ENCODE measurements at regions of chr1 and their contacts with region 1.

Region 1: DNA sequence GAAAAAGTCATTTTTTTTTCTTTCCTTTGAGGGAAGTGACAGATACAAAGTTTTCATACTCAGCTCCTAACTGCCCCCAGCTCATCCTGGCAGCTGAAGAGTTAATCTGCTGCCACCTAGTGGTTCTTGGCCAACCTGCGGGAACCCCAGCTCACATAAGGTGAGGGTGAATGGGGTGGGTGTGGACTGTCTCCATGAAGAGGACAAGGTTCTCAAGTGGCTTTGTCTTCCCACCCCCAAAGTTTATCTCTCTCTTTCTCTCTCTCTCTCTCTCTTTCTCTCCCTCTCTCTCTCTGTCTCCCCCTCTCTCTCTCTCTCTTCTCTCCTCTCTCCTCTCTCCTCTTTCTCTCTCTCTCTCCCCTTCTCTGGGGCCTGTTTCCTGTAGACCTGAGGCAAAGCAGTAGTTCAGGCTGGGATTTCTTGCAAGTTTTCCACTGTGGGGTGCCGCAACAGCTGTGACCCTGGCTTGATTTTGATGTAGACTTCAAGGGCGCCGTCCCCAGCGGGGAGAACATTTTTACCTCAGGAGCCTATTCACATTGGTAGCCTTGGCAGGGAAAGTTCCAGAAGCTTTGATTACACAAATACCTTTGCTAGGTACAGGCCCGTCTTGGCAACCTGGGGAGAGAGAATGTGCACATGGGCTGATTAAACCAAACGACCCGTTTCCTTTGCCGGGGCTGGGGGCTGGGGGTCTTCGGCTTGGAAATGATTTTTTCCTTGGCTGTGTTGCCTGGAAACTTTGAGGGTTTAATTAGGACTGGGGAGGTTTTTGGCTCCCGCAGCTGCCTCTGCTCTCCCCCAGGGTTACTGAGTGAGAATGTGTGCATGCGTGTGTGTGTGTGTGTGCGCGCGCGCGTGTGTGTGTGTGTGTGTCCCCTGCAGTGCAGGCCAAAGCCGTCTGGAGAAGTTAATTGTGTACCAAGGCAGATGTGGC is 135.9 kb downstream of the TM2D1 start:
- DNase-seq: peak; percentile 79
- H3K4me3 Mint-ChIP-seq: no peak overlapping the region
- H3K27ac Mint-ChIP-seq: no peak overlapping the region
- H3K4me1 Mint-ChIP-seq: peaks cover 9% of the 10 kb centered on the region
- H3K27me3 Mint-ChIP-seq: peaks cover 18% of the 10 kb centered on the region
- CTCF ChIP-seq: peak; percentile 73

Region 2: DNA sequence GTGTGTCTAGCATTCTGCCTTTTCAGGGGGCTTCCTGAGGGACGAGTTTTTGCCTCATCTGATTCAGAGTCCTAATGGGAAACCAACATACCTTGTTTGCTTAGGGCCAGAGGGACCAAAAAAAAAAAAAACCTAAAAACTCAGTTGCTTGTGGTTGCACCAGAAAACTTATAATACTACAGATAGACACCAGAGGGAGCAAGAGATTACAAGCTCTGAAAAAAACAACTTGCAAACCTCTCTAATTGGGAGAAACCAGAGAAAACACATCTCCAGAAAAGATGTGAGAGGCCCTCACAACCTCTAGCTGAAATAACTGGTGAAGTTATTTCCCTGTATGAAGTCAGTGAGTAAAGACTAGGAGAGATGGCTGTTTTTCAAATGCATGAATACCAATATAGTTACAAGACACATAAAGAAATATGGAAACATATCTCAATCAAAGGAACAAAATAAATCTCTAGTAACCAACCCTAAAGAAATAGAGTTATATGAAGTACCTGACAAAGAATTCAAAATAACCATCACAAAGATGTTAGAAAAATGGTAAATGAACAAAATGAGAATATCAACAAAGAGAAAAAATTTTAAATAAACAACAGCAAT is 740.3 kb before region 1 on chr1:
- CTCF ChIA-PET with region 1: interaction called, 3 read pairs
- intact Hi-C with region 1: loop called (anchors 5 kb)
- DNase-seq: no peak
- H3K4me3 Mint-ChIP-seq: no peak overlapping the region
- H3K27ac Mint-ChIP-seq: peak overlapping the region; percentile 49
- H3K4me1 Mint-ChIP-seq: peaks cover 20% of the 10 kb centered on the region
- H3K27me3 Mint-ChIP-seq: no peaks in the 10 kb centered on the region
- CTCF ChIP-seq: peak; percentile 60

Region 3: GRCh38 chr1:60969971-60970509 is 619.0 kb before region 1 on chr1:
- CTCF ChIA-PET with region 1: interaction called, 5 read pairs
- intact Hi-C with region 1: loop called (anchors 2 kb)
- DNase-seq: no peak
- H3K4me3 Mint-ChIP-seq: no peak overlapping the region
- H3K27ac Mint-ChIP-seq: no peak overlapping the region
- H3K4me1 Mint-ChIP-seq: peaks cover 28% of the 10 kb centered on the region
- H3K27me3 Mint-ChIP-seq: peaks cover 11% of the 10 kb centered on the region
- CTCF ChIP-seq: no peak

Region 4: DNA sequence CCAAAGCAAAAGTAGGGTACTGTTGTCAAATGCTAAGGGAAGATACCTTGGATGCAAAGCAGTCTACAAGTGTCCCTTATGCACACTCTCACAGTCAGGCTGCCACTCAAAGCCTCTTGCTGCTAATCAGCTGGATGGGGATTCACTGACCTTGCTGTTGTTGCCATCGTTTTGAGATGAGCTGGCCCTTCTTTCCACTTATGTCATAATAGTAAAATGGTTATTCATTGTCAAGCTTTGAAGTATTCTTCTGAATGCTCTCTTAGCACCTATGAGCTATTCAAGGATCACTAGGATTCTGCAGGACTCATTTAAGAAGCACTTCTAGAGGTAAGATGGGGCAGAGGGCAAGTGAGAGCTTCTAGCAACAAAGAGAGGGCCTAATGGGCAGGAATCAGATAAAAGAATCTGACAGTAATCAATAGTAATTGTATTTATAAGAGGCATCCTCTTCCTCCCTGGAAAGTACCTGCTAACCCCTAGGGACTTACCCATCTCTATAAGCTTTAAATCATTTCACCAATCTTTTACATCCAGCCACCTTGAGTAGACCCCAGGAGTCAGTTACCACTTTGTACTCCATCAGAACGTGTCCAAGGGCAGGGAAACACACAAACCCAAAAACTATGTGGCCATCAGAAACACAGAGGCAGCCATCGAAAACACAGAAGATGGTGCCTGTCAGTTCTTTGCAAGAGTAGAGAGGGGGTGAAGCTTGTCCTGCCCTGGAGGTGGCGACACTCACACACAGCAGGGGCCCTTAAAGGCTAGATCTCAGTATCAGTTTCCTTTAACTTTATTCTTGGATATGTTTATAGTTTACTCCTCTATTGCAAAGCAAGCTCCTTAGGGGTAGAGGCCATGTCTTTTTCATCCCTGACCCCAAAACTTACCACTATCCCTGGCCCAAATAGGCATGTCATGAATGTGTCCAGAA is 610.3 kb before region 1 on chr1:
- CTCF ChIA-PET with region 1: interaction called, 19 read pairs
- intact Hi-C with region 1: loop called (anchors 2 kb)
- DNase-seq: peak; percentile 66
- H3K4me3 Mint-ChIP-seq: no peak overlapping the region
- H3K27ac Mint-ChIP-seq: no peak overlapping the region
- H3K4me1 Mint-ChIP-seq: no peaks in the 10 kb centered on the region
- H3K27me3 Mint-ChIP-seq: no peaks in the 10 kb centered on the region
- CTCF ChIP-seq: peak; percentile 57

Region 5: DNA sequence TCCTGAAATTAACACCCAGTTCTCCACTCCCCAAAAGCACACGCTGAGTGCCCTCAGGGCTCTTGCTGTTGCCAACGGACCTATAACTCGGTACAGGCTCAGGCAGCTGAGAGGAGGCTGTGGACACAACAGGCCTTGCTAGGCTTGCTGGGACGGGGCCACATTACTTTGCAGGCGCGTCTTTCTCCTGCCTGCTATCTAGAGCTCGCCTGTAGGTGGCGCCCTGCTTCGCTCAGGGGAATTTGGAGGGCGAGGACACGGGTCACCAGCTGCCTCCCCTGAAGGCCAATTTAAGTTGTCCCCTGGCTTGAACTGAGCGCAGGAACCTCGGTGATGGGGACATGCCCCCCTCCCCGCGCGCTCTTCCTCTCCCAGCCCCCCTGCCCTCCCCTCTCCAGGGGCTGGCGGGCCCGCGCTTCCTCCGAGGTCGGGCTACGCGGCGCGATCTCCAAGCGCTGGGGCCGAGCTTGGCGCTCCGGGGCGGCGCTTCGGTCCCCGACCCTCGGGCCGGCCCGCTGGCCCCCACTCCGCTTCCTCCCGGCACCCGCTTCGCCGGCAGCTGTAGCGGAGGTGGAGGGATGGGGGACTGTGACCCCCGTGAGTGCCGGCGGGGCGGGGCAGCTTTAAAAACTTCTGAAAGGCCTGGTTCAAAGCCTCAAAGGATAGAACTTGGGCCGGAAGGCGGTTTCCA is 539.0 kb before region 1 on chr1:
- CTCF ChIA-PET with region 1: interaction called, 9 read pairs
- intact Hi-C with region 1: loop called (anchors 5 kb)
- DNase-seq: peak; percentile 93
- H3K4me3 Mint-ChIP-seq: peak overlapping the region; percentile 71
- H3K27ac Mint-ChIP-seq: peak overlapping the region; percentile 33
- H3K4me1 Mint-ChIP-seq: peaks cover 19% of the 10 kb centered on the region
- H3K27me3 Mint-ChIP-seq: peaks cover 27% of the 10 kb centered on the region
- CTCF ChIP-seq: peak; percentile 97

Region 6: GRCh38 chr1:61536174-61537108 is 52.6 kb before region 1 on chr1:
- CTCF ChIA-PET with region 1: no interaction called
- intact Hi-C with region 1: no loop called
- DNase-seq: no peak
- H3K4me3 Mint-ChIP-seq: no peak overlapping the region
- H3K27ac Mint-ChIP-seq: no peak overlapping the region
- H3K4me1 Mint-ChIP-seq: no peaks in the 10 kb centered on the region
- H3K27me3 Mint-ChIP-seq: no peaks in the 10 kb centered on the region
- CTCF ChIP-seq: no peak

Region 7: GRCh38 chr1:61851849-61852669 is 263.1 kb after region 1 on chr1:
- CTCF ChIA-PET with region 1: no interaction called
- intact Hi-C with region 1: loop called (anchors 5 kb)
- DNase-seq: peak; percentile 20
- H3K4me3 Mint-ChIP-seq: no peak overlapping the region
- H3K27ac Mint-ChIP-seq: no peak overlapping the region
- H3K4me1 Mint-ChIP-seq: no peaks in the 10 kb centered on the region
- H3K27me3 Mint-ChIP-seq: no peaks in the 10 kb centered on the region
- CTCF ChIP-seq: peak; percentile 59

Region 8: GRCh38 chr1:61951731-61952580 is 363.0 kb after region 1 on chr1:
- CTCF ChIA-PET with region 1: no interaction called
- intact Hi-C with region 1: no loop called
- DNase-seq: no peak
- H3K4me3 Mint-ChIP-seq: no peak overlapping the region
- H3K27ac Mint-ChIP-seq: no peak overlapping the region
- H3K4me1 Mint-ChIP-seq: peaks cover 9% of the 10 kb centered on the region
- H3K27me3 Mint-ChIP-seq: no peaks in the 10 kb centered on the region
- CTCF ChIP-seq: no peak